Right cardiac atrium (tissue), 5 donors: ENCODE measurements at regions of chr10 and their contacts with region 1.

Region 1: DNA sequence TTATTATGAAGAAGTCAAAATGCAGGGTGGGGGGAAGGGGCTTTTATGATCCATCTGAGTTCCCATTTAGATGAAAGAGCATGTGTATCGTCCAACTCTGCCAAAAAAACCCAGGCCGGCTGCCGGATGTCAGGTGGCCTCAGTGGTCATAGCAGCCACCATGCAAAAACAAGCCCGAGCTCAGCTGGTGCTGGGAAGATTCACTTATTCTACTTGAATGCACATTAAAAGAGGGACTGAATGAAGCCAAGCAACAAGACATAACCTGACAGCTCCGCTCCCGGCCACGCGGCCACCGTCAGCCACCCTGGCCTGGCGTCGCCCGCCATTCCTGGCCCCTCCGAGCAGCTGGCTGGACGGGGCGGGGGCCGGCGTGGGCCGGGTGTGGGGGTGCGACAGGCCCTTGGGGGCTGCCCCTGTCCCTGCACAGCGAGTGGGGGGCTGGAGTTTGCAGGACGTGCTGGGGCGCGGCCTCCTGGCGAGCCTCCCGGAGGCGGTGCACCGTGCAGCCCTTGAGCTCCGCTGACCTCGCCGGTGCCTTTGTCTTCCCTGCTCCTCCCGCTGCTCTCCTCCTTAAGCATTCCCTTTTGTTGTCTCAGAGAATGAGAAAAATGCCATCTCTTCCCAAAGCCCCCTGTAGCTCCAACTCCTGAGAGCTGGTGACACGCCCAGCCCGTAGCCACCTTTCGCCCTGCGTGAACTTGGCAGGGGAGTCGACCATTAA is 67.8 kb downstream of the EBF3 start:
- DNase-seq: no peak
- ATAC-seq: no peak
- H3K4me3 ChIP-seq: no peak overlapping the region
- H3K27ac ChIP-seq: no peak overlapping the region
- H3K4me1 ChIP-seq: peaks cover 6% of the 10 kb centered on the region
- H3K27me3 ChIP-seq: no peaks in the 10 kb centered on the region

Region 2: DNA sequence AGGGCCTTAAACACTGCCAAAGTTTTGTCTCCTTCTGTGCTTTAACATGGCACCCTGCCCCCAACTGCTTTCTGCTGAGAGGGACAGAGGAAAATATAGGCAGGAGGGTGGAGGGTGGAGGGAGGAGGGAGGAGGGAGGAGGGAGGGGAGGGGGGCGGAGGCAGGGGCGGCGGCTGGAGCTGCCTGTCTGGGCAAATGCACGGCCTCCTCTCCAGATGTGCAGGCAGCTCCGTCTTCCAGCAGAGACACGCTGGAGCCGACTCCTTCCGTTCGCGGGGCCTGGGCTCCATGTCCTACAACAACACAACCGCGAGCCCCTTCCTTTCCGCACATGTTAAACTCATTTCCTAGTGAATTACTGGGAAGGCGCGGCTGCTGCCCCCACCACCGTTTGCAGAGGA is 53.6 kb after region 1 on chr10:
- intact Hi-C with region 1: loop called in 2 of 4 experiments (anchors 5 to 10 kb)
- DNase-seq: peak; percentile 78 to 89 (median 89)
- ATAC-seq: peak; percentile 65 to 70
- H3K4me3 ChIP-seq: peak overlapping the region; percentile 7
- H3K27ac ChIP-seq: peak overlapping the region; percentile 78
- H3K4me1 ChIP-seq: peaks cover 13% of the 10 kb centered on the region
- H3K27me3 ChIP-seq: no peaks in the 10 kb centered on the region

Region 3: GRCh38 chr10:129963641-129964501 is 67.6 kb after region 1 on chr10 and contains the start of gene EBF3:
- intact Hi-C with region 1: loop called in 1 of 4 experiments (anchors 5 kb)
- DNase-seq: peak; percentile 91 to 97 (median 96)
- ATAC-seq: peak; percentile 84 to 87
- H3K4me3 ChIP-seq: peak within 1 kb of the TSS; percentile 75
- H3K27ac ChIP-seq: peak within 1 kb of the TSS; percentile 67
- H3K4me1 ChIP-seq: no peaks in the 10 kb centered on the region
- H3K27me3 ChIP-seq: no peaks in the 10 kb centered on the region
- total RNA-seq, gene EBF3: 4.4 to 9.7 (median 7.7) TPM